ENCODE measurements at regions of chr9 and their contacts with region 1.

Region 1: GRCh38 chr9:28518439-28518838 is 945.2 kb upstream of the C9orf72 start:
- DNase-seq: no peak
- H3K4me3 ChIP-seq: no peak overlapping the region
- H3K27ac ChIP-seq: no peak overlapping the region
- H3K4me1 ChIP-seq: no peaks in the 10 kb centered on the region
- H3K27me3 ChIP-seq: no peaks in the 10 kb centered on the region
- CTCF ChIP-seq: no peak

Region 2: DNA sequence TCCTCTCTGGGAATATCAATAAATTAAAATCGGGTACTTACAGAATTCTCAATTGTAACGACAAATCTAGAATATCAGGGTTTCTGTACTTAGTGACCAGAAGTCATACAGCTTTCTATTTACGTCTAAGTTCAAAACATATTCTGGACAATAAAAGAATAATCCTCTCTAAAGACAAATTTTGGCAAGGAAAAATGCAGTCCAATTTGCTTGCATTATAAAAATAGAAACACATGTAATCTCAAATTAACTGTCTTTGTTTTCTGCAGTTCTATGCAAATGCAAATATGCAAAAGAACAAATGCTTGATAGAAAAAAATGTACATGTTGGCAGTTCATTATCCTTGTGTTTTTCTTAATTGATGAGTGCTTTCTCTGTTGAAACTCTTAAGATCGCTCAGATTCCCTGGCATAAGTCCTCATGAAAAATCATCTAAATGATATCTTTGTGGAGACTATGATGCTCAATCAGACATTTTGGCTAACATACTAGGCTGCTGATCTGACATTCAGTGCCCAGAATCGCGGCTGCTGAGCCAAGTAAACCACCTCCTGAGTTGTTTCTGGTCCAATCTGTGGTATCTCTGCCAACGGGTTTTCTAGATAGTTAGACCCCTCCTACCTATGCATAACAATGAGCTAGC is 45.0 kb after region 1 on chr9:
- CTCF ChIA-PET with region 1: no interaction called
- dilution Hi-C with region 1: no loop called
- in situ Hi-C with region 1: no loop called
- intact Hi-C with region 1: no loop called
- DNase-seq: no peak
- H3K4me3 ChIP-seq: no peak overlapping the region
- H3K27ac ChIP-seq: no peak overlapping the region
- H3K4me1 ChIP-seq: no peaks in the 10 kb centered on the region
- H3K27me3 ChIP-seq: no peaks in the 10 kb centered on the region
- CTCF ChIP-seq: no peak

Region 3: DNA sequence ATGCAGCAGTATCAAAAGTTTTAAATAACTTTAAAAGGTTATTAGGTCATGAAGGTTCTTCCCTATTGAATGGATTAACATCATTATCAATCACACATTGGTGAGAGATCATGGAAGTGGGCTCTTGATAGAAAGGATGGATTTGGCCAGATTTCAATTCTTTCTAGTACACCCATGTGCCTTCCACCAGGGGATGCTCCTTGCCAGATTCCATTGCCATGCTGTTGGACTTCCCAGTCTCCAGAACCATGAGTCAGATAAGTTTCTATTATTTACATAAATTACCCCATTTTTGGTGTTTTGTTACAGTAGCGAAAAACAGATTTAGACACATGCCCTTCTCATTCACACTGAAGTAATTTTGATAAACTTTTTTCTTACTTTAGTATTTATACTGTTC is 65.4 kb after region 1 on chr9:
- CTCF ChIA-PET with region 1: interaction called, 3 read pairs
- dilution Hi-C with region 1: loop called (anchors 5 kb)
- in situ Hi-C with region 1: no loop called
- intact Hi-C with region 1: no loop called
- DNase-seq: no peak
- H3K4me3 ChIP-seq: no peak overlapping the region
- H3K27ac ChIP-seq: no peak overlapping the region
- H3K4me1 ChIP-seq: no peaks in the 10 kb centered on the region
- H3K27me3 ChIP-seq: no peaks in the 10 kb centered on the region
- CTCF ChIP-seq: peak in 1 of 2 donors; percentile 11

Measured in mammary epithelial cell (primary cell).